GM10248 (cell line): ENCODE measurements at regions of chr7 and their contacts with region 1.

Region 1: GRCh38 chr7:44565097-44565794 is 8.5 kb downstream of the DDX56 start:
- DNase-seq: peak; percentile 82
- CTCF ChIP-seq: peak; percentile 97

Region 2: DNA sequence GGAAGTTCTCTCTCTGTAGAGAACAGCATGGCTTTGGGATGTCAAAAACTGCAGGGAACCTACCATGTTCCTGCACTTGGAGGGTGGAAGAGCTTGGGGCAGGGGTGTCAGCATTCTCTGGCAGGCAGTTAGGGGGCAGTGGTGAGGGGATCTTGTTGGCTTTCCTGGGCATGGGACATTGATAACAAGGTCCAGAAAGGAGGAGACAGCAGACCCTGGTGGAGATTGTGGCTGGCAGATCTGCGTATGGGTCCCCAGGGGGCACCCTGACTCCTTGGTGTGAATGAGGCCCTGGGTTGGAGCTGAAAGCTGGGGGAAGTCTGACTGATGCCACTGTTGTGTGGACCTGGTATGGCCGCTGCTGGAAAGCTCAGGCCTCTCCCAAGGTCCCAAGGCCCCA is 216.9 kb before region 1 on chr7:
- CTCF ChIA-PET with region 1: interaction called, 39 read pairs
- POLR2A ChIA-PET with region 1: no interaction called
- DNase-seq: no peak
- CTCF ChIP-seq: peak; percentile 53

Region 3: GRCh38 chr7:44541028-44541869 is 24.0 kb before region 1 on chr7 and contains the start of gene NPC1L1:
- CTCF ChIA-PET with region 1: interaction called, 29 read pairs
- POLR2A ChIA-PET with region 1: no interaction called
- DNase-seq: peak; percentile 17
- CTCF ChIP-seq: no peak

Region 4: DNA sequence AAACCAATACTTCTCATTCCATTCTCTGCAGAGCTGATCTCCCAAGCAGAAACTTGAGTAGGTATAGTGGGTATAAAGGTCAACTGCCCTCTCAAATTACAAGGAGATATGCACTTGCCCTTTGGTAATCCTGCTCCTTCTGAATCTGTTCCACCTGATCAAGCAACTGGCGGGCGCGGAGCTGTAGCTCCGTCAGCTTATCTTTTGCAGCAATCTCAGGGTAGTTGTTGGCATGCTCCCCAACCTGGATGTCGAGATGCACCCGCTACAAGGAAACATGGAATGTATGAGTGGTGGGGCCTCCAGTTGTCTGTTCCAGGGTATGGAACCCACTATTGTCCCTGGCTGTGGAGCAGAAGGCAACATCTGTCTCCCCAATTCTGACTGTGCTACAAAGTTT is 15.7 kb after region 1 on chr7:
- CTCF ChIA-PET with region 1: interaction called, 41 read pairs
- POLR2A ChIA-PET with region 1: interaction called, 6 read pairs
- DNase-seq: no peak
- CTCF ChIP-seq: no peak